Activated T-helper 2 cell treated with anti-CD3 and anti-CD28 coated beads, Interferon-gamma antibody, Interleukin-2, Interleukin-4, amounts not matched to agents 10 μg/mL and 5 μg/mL and 100 μg/mL, durations not matched to agents 14 hours and 24 hours and 36 hours (primary cell): ENCODE measurements at regions of chr9 and their contacts with region 1.

Region 1: DNA sequence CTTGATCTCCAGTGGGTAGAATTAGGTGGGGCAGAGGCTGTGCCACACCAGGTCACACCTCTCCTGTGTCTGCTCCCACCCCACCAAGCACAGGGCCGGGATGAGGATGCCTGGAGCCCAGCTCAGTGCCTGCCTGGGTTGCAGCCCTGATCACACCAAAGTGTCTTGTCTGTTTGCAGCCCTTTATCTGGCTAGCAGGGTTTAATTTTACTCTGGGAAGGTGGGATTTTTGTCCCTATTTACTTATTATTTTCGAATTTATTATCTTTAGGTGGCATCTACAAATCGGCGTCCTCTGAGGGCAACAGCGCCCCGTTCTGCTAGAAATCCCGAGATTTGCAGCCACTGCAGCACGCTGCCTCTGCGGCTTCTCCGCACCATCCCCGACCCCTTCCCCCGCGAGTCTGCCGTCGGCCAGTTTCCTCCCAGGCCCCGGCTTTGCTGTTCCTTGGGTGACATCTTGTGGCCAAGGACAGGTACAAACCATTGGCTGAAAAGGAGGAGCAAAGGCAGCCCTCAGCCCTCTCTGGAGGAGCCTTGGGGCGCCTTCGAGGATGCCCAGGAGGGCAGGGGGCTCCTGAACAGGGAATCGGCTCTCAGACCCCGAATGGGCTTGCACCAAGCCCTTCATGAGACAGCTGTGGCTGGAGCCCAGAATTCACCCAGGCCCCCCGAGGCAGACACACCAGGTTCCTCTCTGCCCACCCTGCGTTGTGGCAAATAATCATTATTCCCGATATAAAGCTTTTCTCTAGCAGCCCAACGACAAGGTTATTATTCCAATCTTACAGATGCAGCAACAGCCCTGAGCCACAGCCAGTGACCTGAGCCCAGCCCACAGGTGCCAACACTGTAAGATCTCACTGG is 113.0 kb downstream of the GAPVD1 start:
- DNase-seq: peak; percentile 44
- H3K4me3 Mint-ChIP-seq: peak overlapping the region; percentile 37
- H3K27ac Mint-ChIP-seq: no peak overlapping the region
- H3K4me1 Mint-ChIP-seq: peaks cover 2% of the 10 kb centered on the region
- H3K27me3 Mint-ChIP-seq: peaks cover 3% of the 10 kb centered on the region

Region 2: GRCh38 chr9:124852829-124853531 is 521.7 kb before region 1 on chr9 and contains the start of gene WDR38:
- intact Hi-C with region 1: loop called (anchors 10 kb)
- DNase-seq: peak; percentile 74
- H3K4me3 Mint-ChIP-seq: peak within 1 kb of the TSS; percentile 66
- H3K27ac Mint-ChIP-seq: no peak within 1 kb of the TSS
- H3K4me1 Mint-ChIP-seq: peaks cover 6% of the 10 kb centered on the region
- H3K27me3 Mint-ChIP-seq: peaks cover 8% of the 10 kb centered on the region
- total RNA-seq, gene WDR38: not detected in 2 replicates

Region 3: GRCh38 chr9:125008599-125008998 is 366.1 kb before region 1 on chr9:
- intact Hi-C with region 1: no loop called
- DNase-seq: no peak
- H3K4me3 Mint-ChIP-seq: no peak overlapping the region
- H3K27ac Mint-ChIP-seq: no peak overlapping the region
- H3K4me1 Mint-ChIP-seq: no peaks in the 10 kb centered on the region
- H3K27me3 Mint-ChIP-seq: no peaks in the 10 kb centered on the region